OCI-LY7 (cell line): ENCODE measurements at regions of chr7 and their contacts with region 1.

Region 1: DNA sequence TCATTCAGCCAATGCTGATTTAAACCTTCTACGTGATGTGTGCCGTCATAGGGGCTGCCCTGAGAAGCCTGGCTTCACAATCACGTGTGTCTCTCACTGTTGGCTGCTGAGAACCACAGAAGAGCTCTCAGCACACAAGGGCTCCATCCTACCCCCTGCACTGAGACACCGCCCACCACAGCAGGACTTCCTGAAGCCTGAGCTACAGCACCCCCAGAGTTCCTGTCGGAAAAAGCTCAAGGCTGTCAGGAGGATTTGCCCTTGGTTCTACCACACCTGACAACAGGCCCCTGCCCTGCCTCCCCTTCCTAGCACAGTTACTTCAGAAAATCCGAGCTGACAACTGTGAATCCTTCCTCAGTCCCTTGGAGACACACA is 191.9 kb downstream of the MAD1L1 start:
- DNase-seq: peak; percentile 53
- H3K4me3 ChIP-seq: no peak overlapping the region
- H3K27ac ChIP-seq: peak overlapping the region; percentile 72
- H3K4me1 ChIP-seq: peaks cover 52% of the 10 kb centered on the region
- CTCF ChIP-seq: no peak

Region 2: GRCh38 chr7:1619152-1620006 is 421.5 kb before region 1 on chr7:
- CTCF ChIA-PET with region 1: no interaction called
- POLR2A ChIA-PET with region 1: no interaction called
- intact Hi-C with region 1: no loop called
- DNase-seq: no peak
- H3K4me3 ChIP-seq: no peak overlapping the region
- H3K27ac ChIP-seq: no peak overlapping the region
- H3K4me1 ChIP-seq: no peaks in the 10 kb centered on the region
- CTCF ChIP-seq: no peak

Region 3: DNA sequence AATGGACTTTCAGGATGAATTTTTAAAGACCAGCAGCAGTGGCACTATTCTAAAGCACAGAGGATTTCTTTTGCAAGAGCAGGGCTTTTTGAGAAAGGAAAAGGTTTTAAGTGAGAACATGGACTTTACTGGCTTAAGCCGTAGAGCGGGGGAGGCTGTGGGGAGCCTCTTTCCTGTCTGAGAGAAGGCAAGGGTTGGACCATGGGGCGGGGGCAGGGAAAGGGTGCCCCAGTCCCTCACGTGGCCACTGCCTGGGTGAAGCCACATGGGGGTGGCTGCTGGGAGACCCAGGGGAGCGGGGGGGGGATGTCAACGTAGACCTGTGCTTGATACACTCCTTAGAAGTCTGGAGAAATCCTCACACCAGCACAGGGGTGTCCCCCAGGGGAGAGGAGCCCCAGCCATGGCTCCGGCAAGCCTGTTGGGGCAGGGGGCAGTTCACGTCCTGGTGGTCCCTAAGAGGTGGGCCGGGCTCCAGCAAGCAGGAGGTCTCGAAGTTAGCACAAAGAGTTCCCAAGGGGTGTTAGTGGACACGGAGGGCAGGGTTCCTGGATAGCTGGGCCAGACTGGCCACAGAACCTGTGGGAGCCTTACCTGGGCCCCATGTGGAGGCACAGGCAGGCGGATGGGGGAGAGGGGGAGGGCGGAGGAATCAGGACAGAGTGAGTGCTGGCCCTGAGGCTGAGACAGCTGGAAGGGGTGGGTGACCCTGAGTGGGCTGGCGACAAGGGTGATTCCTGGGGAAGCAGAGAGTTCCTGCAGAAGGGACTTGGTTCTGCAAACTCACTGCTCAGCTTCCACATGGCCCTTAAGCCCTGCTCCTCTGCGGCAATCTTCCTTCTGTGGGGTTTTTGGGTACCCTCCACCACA is 407.7 kb before region 1 on chr7:
- CTCF ChIA-PET with region 1: no interaction called
- POLR2A ChIA-PET with region 1: no interaction called
- intact Hi-C with region 1: no loop called
- DNase-seq: no peak
- H3K4me3 ChIP-seq: no peak overlapping the region
- H3K27ac ChIP-seq: no peak overlapping the region
- H3K4me1 ChIP-seq: no peaks in the 10 kb centered on the region
- CTCF ChIP-seq: no peak

Region 4: GRCh38 chr7:1940402-1940786 is 100.5 kb before region 1 on chr7:
- CTCF ChIA-PET with region 1: no interaction called
- POLR2A ChIA-PET with region 1: no interaction called
- intact Hi-C with region 1: loop called (anchors 2 kb)
- DNase-seq: peak; percentile 80
- H3K4me3 ChIP-seq: peak overlapping the region; percentile 9
- H3K27ac ChIP-seq: peak overlapping the region; percentile 47
- H3K4me1 ChIP-seq: peaks cover 17% of the 10 kb centered on the region
- CTCF ChIP-seq: no peak

Region 5: DNA sequence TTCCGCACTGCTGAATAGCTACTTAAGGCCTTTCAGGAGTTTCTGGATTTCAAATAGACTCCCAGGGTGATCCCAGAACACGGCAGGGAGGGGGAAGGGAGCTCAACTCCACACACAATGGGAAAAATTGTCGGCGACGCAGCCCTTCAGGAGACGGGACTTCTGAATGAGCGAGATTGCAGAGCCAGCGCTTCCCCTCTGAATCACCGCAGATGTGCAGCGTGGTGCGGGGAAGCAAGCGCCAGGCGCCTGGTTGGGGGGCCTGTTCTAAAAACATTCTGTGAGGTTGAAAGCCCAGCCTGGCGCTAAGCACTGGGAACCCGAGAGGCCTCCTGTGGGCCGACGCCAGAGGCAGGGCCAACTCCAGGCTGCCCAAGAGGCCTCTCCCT is 28.6 kb after region 1 on chr7:
- CTCF ChIA-PET with region 1: interaction called, 4 read pairs
- POLR2A ChIA-PET with region 1: interaction called, 3 read pairs
- intact Hi-C with region 1: loop called (anchors 2 kb)
- DNase-seq: peak; percentile 11
- H3K4me3 ChIP-seq: no peak overlapping the region
- H3K27ac ChIP-seq: peak overlapping the region; percentile 24
- H3K4me1 ChIP-seq: peaks cover 54% of the 10 kb centered on the region
- CTCF ChIP-seq: no peak

Region 6: GRCh38 chr7:2109936-2110585 is 69.2 kb after region 1 on chr7:
- CTCF ChIA-PET with region 1: no interaction called
- POLR2A ChIA-PET with region 1: interaction called, 3 read pairs
- intact Hi-C with region 1: loop called (anchors 2 kb)
- DNase-seq: peak; percentile 92
- H3K4me3 ChIP-seq: peak overlapping the region; percentile 64
- H3K27ac ChIP-seq: peak overlapping the region; percentile 79
- H3K4me1 ChIP-seq: peaks cover 40% of the 10 kb centered on the region
- CTCF ChIP-seq: no peak